ENCODE measurements at regions of chr17 and their contacts with region 1.

Region 1: GRCh38 chr17:35069311-35069710 is 5.8 kb upstream of the RFFL start:
- DNase-seq: no peak
- H3K4me3 ChIP-seq: no peak overlapping the region
- H3K27ac ChIP-seq: no peak overlapping the region
- H3K4me1 ChIP-seq: no peaks in the 10 kb centered on the region
- H3K27me3 ChIP-seq: no peaks in the 10 kb centered on the region
- CTCF ChIP-seq: no peak
- POLR2A ChIP-seq: no peak

Region 2: DNA sequence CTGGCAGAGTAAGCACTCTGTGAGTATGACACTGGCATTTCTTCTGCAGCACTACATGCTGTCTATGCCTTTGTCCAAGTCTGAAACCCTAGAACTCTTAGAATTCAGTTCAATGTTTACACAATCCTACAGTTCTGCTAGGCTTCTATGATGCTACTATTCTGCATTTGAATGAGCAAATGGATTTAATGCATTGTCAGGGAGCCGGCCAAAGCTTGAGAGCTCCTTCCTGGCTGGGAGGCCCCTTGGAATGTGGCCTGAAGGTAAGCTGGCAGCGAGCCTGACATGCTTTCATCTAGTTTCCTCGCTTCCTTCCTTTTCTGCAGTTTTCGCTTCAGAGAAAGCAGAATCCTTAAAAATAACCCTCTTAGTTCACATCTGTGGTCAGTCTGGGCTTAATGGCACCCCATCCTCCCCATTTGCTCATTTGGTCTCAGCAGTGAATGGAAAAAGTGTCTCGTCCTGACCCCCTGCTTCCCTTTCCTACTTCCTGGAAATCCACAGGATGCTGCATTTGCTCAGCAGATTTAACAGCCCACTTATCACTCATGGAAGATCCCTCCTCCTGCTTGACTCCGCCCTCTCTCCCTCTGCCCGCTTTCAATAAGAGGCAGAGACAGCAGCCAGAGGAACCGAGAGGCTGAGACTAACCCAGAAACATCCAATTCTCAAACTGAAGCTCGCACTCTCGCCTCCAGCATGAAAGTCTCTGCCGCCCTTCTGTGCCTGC is 814.5 kb before region 1 on chr17 and contains the start of gene CCL2:
- intact Hi-C with region 1: loop called (anchors 5 kb)
- DNase-seq: peak in 1 of 2 donors; percentile 65
- H3K4me3 ChIP-seq: peak within 1 kb of the TSS; percentile 36 to 63 (median 39)
- H3K27ac ChIP-seq: peak within 1 kb of the TSS; percentile 75 to 90
- H3K4me1 ChIP-seq: peaks cover 20 to 24% of the 10 kb centered on the region in 2 donors
- H3K27me3 ChIP-seq: no peaks in the 10 kb centered on the region
- CTCF ChIP-seq: no peak
- POLR2A ChIP-seq: no peak
- total RNA-seq, gene CCL2: 7.4 to 64.4 (median 26.5) TPM

Region 3: GRCh38 chr17:35467824-35468223 is 398.5 kb after region 1 on chr17:
- intact Hi-C with region 1: loop called (anchors 5 kb)
- DNase-seq: no peak
- H3K4me3 ChIP-seq: no peak overlapping the region
- H3K27ac ChIP-seq: no peak overlapping the region
- H3K4me1 ChIP-seq: no peaks in the 10 kb centered on the region
- H3K27me3 ChIP-seq: no peaks in the 10 kb centered on the region
- CTCF ChIP-seq: no peak
- POLR2A ChIP-seq: no peak